Left cardiac atrium (tissue), 4 donors: ENCODE measurements at regions of chr11 and their contacts with region 1.

Region 1: GRCh38 chr11:36702330-36703055 is 104.5 kb upstream of the RAG2 start:
- DNase-seq: no peak
- ATAC-seq: peak; percentile 89 to 93

Region 2: DNA sequence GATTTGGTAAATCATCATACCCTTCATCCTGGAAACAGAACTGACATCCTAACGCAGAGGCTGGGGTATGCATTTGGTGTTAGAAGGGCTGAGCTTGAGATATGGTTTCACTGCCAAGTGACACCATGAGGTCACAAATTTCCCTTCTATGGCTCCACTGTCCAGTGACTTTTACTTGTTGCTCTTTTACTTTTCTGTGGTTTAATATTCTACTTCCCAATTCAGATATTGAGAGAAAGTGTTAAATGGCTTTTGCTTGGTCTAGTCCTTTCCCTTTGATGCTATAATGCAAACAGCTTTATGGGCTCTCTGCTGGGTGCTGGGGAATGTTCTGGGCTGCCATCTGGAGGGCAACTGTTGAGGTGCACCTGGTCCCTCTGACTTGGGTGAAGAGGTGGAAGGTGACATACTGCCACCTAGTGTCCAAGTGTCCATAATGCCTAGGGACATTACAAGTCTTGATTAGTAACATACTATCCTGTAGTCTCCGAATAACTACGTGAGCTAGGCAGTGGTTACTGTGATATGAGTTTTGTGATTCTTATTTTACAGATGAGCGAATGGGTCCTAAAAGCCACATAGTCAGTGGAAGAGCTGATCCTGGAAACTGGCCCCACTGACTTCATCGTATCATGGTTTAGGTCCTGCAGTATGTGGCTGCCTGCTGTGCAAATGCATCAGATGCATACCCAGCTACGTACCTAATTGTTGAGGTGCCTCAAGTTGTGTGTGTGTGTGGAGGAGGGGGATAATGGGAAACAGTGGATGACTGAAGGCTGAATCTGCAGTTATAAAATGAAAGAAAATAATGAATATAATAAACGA is 44.6 kb after region 1 on chr11:
- intact Hi-C with region 1: loop called (anchors 2 to 10 kb)
- DNase-seq: peak; percentile 77
- ATAC-seq: peak; percentile 94 to 97